B cell (primary cell): ENCODE measurements at regions of chr4 and their contacts with region 1.

Region 1: GRCh38 chr4:152073351-152074087 is 312.7 kb upstream of the GATB start:
- DNase-seq: no peak
- ATAC-seq: no peak
- H3K4me3 ChIP-seq: no peak overlapping the region
- H3K4me3 Mint-ChIP-seq: no peak overlapping the region
- H3K27ac ChIP-seq: no peak overlapping the region
- H3K27ac Mint-ChIP-seq: no peak overlapping the region
- H3K4me1 ChIP-seq: no peaks in the 10 kb centered on the region
- H3K4me1 Mint-ChIP-seq: no peaks in the 10 kb centered on the region
- H3K27me3 ChIP-seq: no peaks in the 10 kb centered on the region
- H3K27me3 Mint-ChIP-seq: peaks cover 4% of the 10 kb centered on the region
- CTCF ChIP-seq: no peak

Region 2: DNA sequence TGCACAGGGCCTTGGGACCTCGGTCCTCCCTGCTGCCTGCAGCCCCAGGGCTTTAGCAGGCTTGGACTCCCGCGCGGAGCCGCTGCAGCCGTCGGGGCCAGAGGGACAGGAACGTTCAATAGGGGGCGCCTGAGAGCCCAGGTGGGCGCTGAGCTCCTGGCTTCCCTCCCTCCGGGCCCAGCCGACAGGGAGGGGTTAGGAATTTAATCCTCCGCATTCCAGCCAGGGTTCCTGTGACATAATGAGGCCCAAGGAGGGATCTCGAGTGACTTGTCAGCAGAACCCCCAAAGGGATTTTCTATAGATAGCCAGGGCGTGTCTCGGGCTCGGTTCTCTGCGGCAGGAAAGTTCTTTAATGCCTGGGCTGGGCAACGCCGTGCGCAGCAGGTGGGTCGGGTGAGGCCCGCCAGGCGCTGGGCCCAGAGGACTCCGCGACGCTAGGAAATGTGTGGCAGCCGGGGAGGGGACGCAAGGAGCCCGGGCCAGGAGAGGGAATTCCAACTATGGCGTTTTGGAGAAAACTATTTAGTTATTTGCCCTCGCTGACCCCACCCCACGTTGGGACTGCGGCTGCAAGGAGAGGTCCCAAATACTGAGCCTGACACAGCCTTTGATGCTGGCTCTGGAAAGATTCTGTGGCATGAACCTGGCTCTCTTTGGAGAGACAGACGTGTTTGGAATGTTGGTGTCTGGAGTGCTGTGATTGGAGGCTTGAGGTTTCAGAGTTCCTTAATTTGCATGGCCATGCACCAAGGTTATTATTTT is 27.5 kb before region 1 on chr4:
- CTCF ChIA-PET with region 1: no interaction called
- POLR2A ChIA-PET with region 1: no interaction called
- intact Hi-C with region 1: loop called (anchors 1 kb)
- DNase-seq: no peak
- ATAC-seq: peak; percentile 31
- H3K4me3 ChIP-seq: peak overlapping the region in 4 of 5 experiments; percentile 7 to 55 (median 28)
- H3K4me3 Mint-ChIP-seq: peak overlapping the region; percentile 62
- H3K27ac ChIP-seq: peak overlapping the region in 1 of 2 donors; percentile 6
- H3K27ac Mint-ChIP-seq: no peak overlapping the region
- H3K4me1 ChIP-seq: peaks cover 12 to 17% of the 10 kb centered on the region in 2 donors
- H3K4me1 Mint-ChIP-seq: peaks cover 9% of the 10 kb centered on the region
- H3K27me3 ChIP-seq: peaks cover 0 to 14% (median 2%) of the 10 kb centered on the region in 4 experiments
- H3K27me3 Mint-ChIP-seq: peaks cover 37% of the 10 kb centered on the region
- CTCF ChIP-seq: peak; percentile 40